Activated CD4-positive, alpha-beta memory T cell treated with anti-CD3 and anti-CD28 coated beads for 36 hours (primary cell): ENCODE measurements at regions of chr9 and their contacts with region 1.

Region 1: DNA sequence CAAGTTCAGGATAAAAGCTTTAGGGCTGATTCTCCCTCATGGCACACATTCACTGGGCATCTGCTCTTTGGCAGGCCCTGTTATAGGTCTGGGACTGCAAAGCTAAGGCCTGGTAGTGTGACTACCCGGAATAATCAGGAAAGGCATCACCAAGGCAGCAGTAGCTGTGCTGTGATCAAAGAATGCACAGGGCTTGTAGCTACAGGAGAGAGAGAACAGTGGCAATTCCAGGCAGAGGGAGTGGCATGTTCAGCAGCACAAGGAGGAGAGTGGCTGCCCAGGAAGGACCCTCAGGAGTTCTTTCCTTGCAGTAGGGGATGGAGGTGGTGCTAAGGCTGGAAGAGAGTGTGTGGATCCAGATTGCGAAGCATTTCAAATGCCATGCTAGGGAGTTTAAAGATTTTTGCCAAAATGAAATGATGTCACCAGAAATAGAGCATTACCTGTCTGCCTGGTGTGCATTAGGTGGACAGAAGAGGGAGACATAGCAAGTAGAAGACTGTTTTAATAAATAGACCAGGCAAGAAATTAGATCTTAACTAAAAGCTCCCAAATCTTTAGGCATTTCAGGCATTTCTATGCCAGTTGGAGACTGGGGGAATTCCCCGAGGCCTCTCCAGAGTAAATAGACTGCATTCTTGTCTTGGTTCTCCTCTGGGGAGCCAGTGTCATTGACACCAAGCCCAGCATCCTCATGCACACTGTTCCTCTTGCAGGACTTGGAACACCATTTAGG is 69.1 kb downstream of the GPR21 start:
- DNase-seq: no peak
- H3K4me3 Mint-ChIP-seq: no peak overlapping the region
- H3K27ac Mint-ChIP-seq: no peak overlapping the region
- H3K4me1 Mint-ChIP-seq: no peaks in the 10 kb centered on the region
- H3K27me3 Mint-ChIP-seq: no peaks in the 10 kb centered on the region

Region 2: DNA sequence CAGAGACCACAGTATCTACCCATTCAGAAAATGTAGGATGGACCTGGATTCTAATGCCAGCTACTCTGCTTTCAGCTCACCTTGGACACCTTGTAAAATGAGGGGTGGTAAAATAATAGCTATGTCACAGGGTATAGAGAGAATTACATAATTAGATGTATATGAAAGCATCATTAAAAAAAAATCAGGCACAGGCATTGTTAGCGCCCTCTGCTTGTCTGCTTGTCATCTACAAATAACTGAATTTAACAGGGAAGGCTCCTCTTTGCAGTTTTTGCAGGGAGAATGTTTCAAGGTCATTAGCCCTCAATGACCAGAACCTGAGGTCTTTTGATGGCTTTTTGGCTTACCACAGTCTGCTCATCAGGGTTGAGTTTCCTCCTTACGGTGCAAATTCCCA is 11.1 kb before region 1 on chr9:
- CTCF ChIA-PET with region 1: interaction called, 14 read pairs
- POLR2A ChIA-PET with region 1: no interaction called
- intact Hi-C with region 1: no loop called
- DNase-seq: no peak
- H3K4me3 Mint-ChIP-seq: no peak overlapping the region
- H3K27ac Mint-ChIP-seq: no peak overlapping the region
- H3K4me1 Mint-ChIP-seq: no peaks in the 10 kb centered on the region
- H3K27me3 Mint-ChIP-seq: no peaks in the 10 kb centered on the region